MCF 10A (cell line): ENCODE measurements at regions of chr7 and their contacts with region 1.

Region 1: GRCh38 chr7:87312215-87312865 is 33.1 kb upstream of the CROT start:
- DNase-seq: peak; percentile 71
- H3K4me3 Mint-ChIP-seq: no peak overlapping the region
- H3K27ac Mint-ChIP-seq: no peak overlapping the region
- H3K4me1 Mint-ChIP-seq: peaks cover 13% of the 10 kb centered on the region
- H3K27me3 Mint-ChIP-seq: peaks cover 18% of the 10 kb centered on the region
- CTCF ChIP-seq: peak; percentile 97

Region 2: GRCh38 chr7:86939197-86939814 is 373.0 kb before region 1 on chr7:
- CTCF ChIA-PET with region 1: no interaction called
- POLR2A ChIA-PET with region 1: no interaction called
- intact Hi-C with region 1: loop called (anchors 10 kb)
- DNase-seq: peak; percentile 81
- H3K4me3 Mint-ChIP-seq: no peak overlapping the region
- H3K27ac Mint-ChIP-seq: no peak overlapping the region
- H3K4me1 Mint-ChIP-seq: peaks cover 6% of the 10 kb centered on the region
- H3K27me3 Mint-ChIP-seq: no peaks in the 10 kb centered on the region
- CTCF ChIP-seq: peak; percentile 56

Region 3: GRCh38 chr7:87100326-87100725 is 212.0 kb before region 1 on chr7:
- CTCF ChIA-PET with region 1: no interaction called
- POLR2A ChIA-PET with region 1: no interaction called
- intact Hi-C with region 1: no loop called
- DNase-seq: peak; percentile 74
- H3K4me3 Mint-ChIP-seq: no peak overlapping the region
- H3K27ac Mint-ChIP-seq: no peak overlapping the region
- H3K4me1 Mint-ChIP-seq: no peaks in the 10 kb centered on the region
- H3K27me3 Mint-ChIP-seq: peaks cover under 1% of the 10 kb centered on the region
- CTCF ChIP-seq: no peak

Region 4: GRCh38 chr7:87252166-87252565 is 60.2 kb before region 1 on chr7:
- CTCF ChIA-PET with region 1: no interaction called
- POLR2A ChIA-PET with region 1: no interaction called
- intact Hi-C with region 1: no loop called
- DNase-seq: no peak
- H3K4me3 Mint-ChIP-seq: no peak overlapping the region
- H3K27ac Mint-ChIP-seq: no peak overlapping the region
- H3K4me1 Mint-ChIP-seq: no peaks in the 10 kb centered on the region
- H3K27me3 Mint-ChIP-seq: peaks cover 68% of the 10 kb centered on the region
- CTCF ChIP-seq: no peak

Region 5: DNA sequence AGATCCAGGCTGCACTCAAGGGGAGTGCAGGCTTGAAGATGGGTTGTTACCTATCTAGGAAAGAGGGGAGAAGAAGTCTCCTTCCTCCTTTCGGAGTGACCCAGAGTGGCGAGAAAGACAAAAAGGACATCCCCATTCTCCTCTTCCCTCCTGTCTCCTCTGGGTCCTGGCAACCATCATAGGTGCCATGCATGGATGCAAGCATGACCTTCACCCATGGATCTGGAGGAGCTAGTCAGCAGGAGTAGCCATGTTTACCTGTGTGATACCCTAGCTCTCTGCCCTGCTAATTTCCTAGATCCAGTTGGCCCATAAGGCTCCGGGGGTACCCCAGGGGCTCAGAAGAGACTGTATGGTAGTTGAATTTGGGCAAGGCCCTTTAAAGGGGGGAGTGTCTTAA is 15.9 kb after region 1 on chr7:
- CTCF ChIA-PET with region 1: interaction called, 4 read pairs
- POLR2A ChIA-PET with region 1: interaction called, 41 read pairs
- intact Hi-C with region 1: no loop called
- DNase-seq: no peak
- H3K4me3 Mint-ChIP-seq: no peak overlapping the region
- H3K27ac Mint-ChIP-seq: no peak overlapping the region
- H3K4me1 Mint-ChIP-seq: peaks cover 2% of the 10 kb centered on the region
- H3K27me3 Mint-ChIP-seq: no peaks in the 10 kb centered on the region
- CTCF ChIP-seq: no peak

Region 6: GRCh38 chr7:87370660-87371180 is 58.4 kb after region 1 on chr7:
- CTCF ChIA-PET with region 1: interaction called, 5 read pairs
- POLR2A ChIA-PET with region 1: interaction called, 15 read pairs
- intact Hi-C with region 1: no loop called
- DNase-seq: peak; percentile 28
- H3K4me3 Mint-ChIP-seq: no peak overlapping the region
- H3K27ac Mint-ChIP-seq: peak overlapping the region; percentile 11
- H3K4me1 Mint-ChIP-seq: no peaks in the 10 kb centered on the region
- H3K27me3 Mint-ChIP-seq: no peaks in the 10 kb centered on the region
- CTCF ChIP-seq: no peak

Region 7: DNA sequence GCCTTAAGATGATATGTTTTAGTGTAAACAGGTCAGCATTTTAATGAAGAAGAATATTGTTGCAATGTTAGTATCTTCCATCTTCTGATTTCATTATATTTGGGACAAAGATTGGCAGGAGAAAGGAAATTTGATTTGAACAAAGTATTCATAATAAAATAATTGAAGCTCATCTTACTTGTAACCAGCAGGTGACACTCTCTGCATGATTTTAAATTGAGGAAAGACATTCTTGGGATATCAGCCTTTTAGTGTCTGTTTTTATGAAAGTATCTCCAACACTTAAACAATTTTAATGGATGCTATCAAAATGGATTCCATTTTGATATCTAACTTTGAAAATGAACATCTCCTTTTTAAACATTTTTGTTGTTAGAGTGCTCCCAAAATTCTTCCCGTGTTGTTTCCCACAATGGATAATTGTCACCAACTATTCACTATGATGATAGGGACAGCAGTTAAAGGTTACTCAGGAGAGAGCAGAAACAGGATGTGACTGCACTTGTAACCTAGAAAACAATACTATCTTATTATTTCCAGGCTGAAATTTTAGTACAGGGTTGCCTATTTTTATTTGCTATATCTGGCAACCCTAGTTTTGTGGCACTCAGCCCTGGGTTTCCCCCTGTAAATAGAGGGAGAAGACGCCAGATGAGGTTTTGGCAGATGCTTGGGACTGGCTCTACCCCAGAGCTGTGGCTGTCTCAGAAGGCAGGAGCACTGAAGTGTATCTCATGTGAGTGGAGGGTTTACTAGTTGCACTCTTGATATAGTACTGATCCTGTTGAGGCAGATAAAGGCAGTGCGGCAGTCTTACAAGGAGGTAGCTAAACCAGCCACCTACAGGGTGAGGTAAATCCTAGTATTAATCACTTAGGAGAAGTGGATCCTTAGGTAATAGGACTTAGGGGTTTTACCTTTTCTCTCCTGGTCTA is 194.2 kb after region 1 on chr7:
- CTCF ChIA-PET with region 1: no interaction called
- POLR2A ChIA-PET with region 1: interaction called, 5 read pairs
- intact Hi-C with region 1: loop called (anchors 1 kb)
- DNase-seq: peak; percentile 27
- H3K4me3 Mint-ChIP-seq: no peak overlapping the region
- H3K27ac Mint-ChIP-seq: no peak overlapping the region
- H3K4me1 Mint-ChIP-seq: no peaks in the 10 kb centered on the region
- H3K27me3 Mint-ChIP-seq: no peaks in the 10 kb centered on the region
- CTCF ChIP-seq: peak; percentile 60

Region 8: DNA sequence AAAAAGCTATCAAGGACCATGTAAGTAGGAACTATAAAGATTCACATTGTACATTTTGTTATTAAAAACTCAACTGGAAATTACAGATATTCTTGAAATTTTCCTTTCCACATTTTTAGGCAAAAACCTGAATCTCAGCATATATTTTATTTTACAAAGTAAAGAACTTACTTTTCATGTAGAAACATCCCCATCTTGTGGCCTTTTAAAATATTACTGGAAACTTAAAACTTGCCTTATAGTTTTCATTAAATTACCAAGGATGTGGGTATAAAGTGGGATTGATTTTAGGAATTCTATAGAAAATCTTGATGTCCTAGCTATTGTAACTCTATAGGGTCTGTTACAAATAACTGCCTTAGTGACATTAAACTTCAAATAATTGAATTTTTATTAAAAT is 574.5 kb after region 1 on chr7:
- CTCF ChIA-PET with region 1: interaction called, 4 read pairs
- POLR2A ChIA-PET with region 1: no interaction called
- intact Hi-C with region 1: loop called (anchors 2 kb)
- DNase-seq: peak; percentile 31
- H3K4me3 Mint-ChIP-seq: no peak overlapping the region
- H3K27ac Mint-ChIP-seq: no peak overlapping the region
- H3K4me1 Mint-ChIP-seq: peaks cover 11% of the 10 kb centered on the region
- H3K27me3 Mint-ChIP-seq: no peaks in the 10 kb centered on the region
- CTCF ChIP-seq: peak; percentile 42